GM23248 (cell line): ENCODE measurements at regions of chr6 and their contacts with region 1.

Region 1: GRCh38 chr6:110039364-110039980 is 61.4 kb downstream of the GPR6 start:
- DNase-seq: peak; percentile 83
- H3K4me3 ChIP-seq: no peak overlapping the region
- H3K27ac ChIP-seq: no peak overlapping the region
- H3K4me1 ChIP-seq: no peaks in the 10 kb centered on the region
- H3K27me3 ChIP-seq: no peaks in the 10 kb centered on the region

Region 2: DNA sequence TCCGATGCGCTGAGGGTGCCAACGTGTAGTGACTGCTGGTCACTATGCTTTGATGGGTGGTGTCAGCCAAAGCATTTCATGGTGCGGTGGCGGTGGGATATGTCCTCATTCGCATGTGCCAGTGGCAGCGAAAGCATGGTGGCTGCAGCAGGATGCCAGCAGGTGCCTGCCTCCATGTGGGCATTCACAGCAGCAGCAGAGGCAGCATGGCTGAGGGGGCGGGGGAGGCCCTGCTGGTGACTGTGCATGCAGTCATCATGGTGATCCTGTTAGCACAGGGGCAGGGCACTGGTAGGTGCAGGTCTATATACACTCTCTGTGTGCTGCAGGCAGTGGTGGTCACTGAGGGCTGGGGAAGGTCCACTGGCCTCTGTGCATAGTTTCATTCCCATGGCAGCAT is 326.4 kb before region 1 on chr6:
- in situ Hi-C with region 1: loop called (anchors 5 kb)
- DNase-seq: peak; percentile 20
- H3K4me3 ChIP-seq: no peak overlapping the region
- H3K27ac ChIP-seq: no peak overlapping the region
- H3K4me1 ChIP-seq: no peaks in the 10 kb centered on the region
- H3K27me3 ChIP-seq: no peaks in the 10 kb centered on the region

Region 3: DNA sequence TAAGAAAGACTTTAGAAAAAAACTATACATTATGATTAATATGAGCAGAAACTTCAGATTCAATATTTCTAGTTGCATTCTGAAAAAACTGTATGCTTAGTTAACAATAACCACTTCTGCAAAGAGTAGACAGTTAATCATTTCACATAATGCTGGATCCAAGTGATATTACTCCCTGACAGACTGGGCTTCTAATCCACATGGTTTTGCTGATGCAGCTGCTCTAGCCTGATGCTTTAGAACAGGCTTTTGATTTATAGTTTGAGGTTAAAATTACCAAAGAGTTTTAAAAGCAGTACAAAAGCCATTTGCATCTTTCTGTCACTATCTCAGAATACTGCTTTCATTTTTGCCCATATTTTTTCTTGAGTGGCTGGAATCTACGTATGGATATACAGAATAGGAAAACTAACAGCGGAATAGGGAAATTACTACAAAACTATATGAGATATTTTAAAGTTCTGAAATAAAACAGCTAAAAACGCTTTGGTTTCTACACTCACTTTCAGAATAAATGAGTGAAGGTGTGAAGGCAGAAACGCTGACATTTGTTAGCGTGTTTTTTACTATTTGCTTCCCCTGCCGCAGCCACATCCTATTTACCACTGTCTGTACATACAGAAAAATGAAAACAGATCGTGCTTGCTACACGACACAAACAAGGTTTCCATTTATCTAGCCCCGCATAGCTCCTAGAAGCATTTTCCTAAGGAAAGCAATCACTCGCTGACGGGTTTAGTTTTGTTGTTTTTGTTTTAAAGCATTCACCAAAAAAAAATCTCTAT is 257.0 kb after region 1 on chr6:
- in situ Hi-C with region 1: no loop called
- DNase-seq: peak; percentile 13
- H3K4me3 ChIP-seq: peak overlapping the region; percentile 67
- H3K27ac ChIP-seq: no peak overlapping the region
- H3K4me1 ChIP-seq: no peaks in the 10 kb centered on the region
- H3K27me3 ChIP-seq: no peaks in the 10 kb centered on the region